ENCODE measurements at regions of chr9 and their contacts with region 1.

Region 1: DNA sequence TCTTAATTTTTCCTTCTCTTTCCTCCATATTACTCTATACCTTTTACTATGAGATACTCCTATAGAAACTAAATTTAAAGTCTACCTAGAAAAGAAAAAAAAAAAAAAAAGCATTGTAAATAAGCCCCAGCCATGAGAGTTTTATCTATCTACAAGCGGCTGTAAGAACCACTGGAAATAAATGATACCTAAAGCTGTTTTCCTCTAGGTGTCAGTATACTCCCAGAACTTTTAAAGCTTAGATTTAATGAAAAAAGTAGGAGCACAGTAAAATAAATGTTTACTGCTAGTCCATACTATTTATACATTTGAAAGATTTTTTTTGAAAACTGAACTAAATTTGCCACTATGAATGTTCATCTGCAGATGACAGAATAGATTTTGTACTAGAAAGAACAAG is 26.2 kb downstream of the TYRP1 start:
- DNase-seq: peak; percentile 26
- ATAC-seq: peak; percentile 54; the same call in 2 of the 3 replicates
- H3K4me3 ChIP-seq: no peak overlapping the region
- H3K27ac ChIP-seq: no peak overlapping the region
- H3K4me1 ChIP-seq: no peaks in the 10 kb centered on the region
- H3K27me3 ChIP-seq: no peaks in the 10 kb centered on the region
- CTCF ChIP-seq: peak; percentile 38
- EP300 ChIP-seq: no peak
- POLR2A ChIP-seq: no peak
- RAD21 ChIP-seq: no peak

Region 2: GRCh38 chr9:12230708-12231107 is 488.7 kb before region 1 on chr9:
- CTCF ChIA-PET with region 1: no interaction called
- POLR2A ChIA-PET with region 1: no interaction called
- in situ Hi-C with region 1: no loop called
- intact Hi-C with region 1: no loop called
- DNase-seq: no peak
- ATAC-seq: no peak
- H3K4me3 ChIP-seq: no peak overlapping the region
- H3K27ac ChIP-seq: no peak overlapping the region
- H3K4me1 ChIP-seq: no peaks in the 10 kb centered on the region
- H3K27me3 ChIP-seq: no peaks in the 10 kb centered on the region
- CTCF ChIP-seq: no peak
- EP300 ChIP-seq: no peak
- POLR2A ChIP-seq: no peak
- RAD21 ChIP-seq: no peak

Region 3: DNA sequence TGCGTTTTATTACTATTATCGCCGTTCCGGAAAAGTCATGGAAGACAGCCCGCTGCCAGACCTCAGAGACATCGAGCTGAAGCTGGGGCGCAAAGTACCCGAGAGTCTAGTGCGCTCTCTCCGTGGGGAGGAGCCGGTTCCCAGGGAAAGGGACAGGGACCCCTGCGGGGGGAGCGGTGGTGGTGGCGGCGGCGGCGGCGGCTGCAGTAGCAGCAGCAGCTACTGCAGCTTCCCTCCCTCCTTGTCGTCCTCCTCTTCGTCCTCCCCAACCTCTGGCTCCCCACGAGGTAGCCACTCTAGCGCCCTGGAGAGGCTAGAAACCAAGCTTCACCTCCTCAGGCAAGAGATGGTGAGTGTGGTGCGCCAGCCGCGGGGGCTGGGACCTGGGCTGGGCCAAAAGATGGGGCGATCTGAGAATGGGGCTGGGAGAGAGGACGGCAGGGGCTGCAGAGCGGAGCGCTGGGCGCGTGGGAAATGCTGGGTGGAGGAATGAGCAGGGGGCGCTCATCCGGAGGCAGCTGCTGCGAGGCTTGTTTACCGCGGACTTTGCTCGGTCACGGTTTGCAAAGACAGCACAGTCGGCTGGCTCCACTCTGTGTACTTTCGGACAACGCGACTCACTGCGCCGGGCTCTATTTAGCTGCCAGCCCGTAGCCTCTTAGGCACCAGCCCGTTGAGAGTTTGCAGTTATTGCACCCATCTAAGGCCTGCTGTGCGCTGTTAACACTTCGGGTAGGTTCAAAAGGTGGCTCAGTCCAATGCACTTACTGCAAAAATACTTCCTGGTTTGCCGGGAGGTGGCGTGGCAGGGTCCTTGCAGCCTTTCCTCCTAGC is 56.5 kb after region 1 on chr9:
- CTCF ChIA-PET with region 1: no interaction called
- POLR2A ChIA-PET with region 1: interaction called, 3 read pairs
- in situ Hi-C with region 1: loop called (anchors 10 kb)
- intact Hi-C with region 1: loop called (anchors 1 kb)
- DNase-seq: peak; percentile 88
- ATAC-seq: peak; percentile 93
- H3K4me3 ChIP-seq: peak overlapping the region; percentile 74 to 90 (median 84)
- H3K27ac ChIP-seq: peak overlapping the region; percentile 97
- H3K4me1 ChIP-seq: peaks cover 24% of the 10 kb centered on the region
- H3K27me3 ChIP-seq: no peaks in the 10 kb centered on the region; a peak in 1 of 5 replicates
- CTCF ChIP-seq: peak; percentile 72
- EP300 ChIP-seq: peak; percentile 60 to 67; a peak in 2 of 4 replicates
- POLR2A ChIP-seq: peak; percentile 82 to 88
- RAD21 ChIP-seq: peak; percentile 48; the same call in 1 of the 2 replicates

Region 4: GRCh38 chr9:12819436-12820185 is 100.2 kb after region 1 on chr9:
- CTCF ChIA-PET with region 1: interaction called, 16 read pairs
- POLR2A ChIA-PET with region 1: interaction called, 6 read pairs
- in situ Hi-C with region 1: loop called (anchors 5 kb)
- intact Hi-C with region 1: loop called (anchors 1 kb)
- DNase-seq: peak; percentile 53
- ATAC-seq: peak; percentile 66
- H3K4me3 ChIP-seq: no peak overlapping the region
- H3K27ac ChIP-seq: no peak overlapping the region
- H3K4me1 ChIP-seq: peaks cover 52% of the 10 kb centered on the region
- H3K27me3 ChIP-seq: no peaks in the 10 kb centered on the region
- CTCF ChIP-seq: peak; percentile 76
- EP300 ChIP-seq: no peak
- POLR2A ChIP-seq: no peak
- RAD21 ChIP-seq: peak; percentile 73

Region 5: GRCh38 chr9:12833701-12834100 is 114.3 kb after region 1 on chr9:
- CTCF ChIA-PET with region 1: no interaction called
- POLR2A ChIA-PET with region 1: no interaction called
- in situ Hi-C with region 1: no loop called
- intact Hi-C with region 1: no loop called
- DNase-seq: no peak
- ATAC-seq: no peak
- H3K4me3 ChIP-seq: no peak overlapping the region
- H3K27ac ChIP-seq: no peak overlapping the region
- H3K4me1 ChIP-seq: no peaks in the 10 kb centered on the region
- H3K27me3 ChIP-seq: no peaks in the 10 kb centered on the region
- CTCF ChIP-seq: no peak
- EP300 ChIP-seq: no peak
- POLR2A ChIP-seq: no peak
- RAD21 ChIP-seq: no peak

Region 6: GRCh38 chr9:12884737-12885414 is 165.4 kb after region 1 on chr9:
- CTCF ChIA-PET with region 1: interaction called, 26 read pairs
- POLR2A ChIA-PET with region 1: no interaction called
- in situ Hi-C with region 1: loop called (anchors 5 kb)
- intact Hi-C with region 1: loop called (anchors 1 kb)
- DNase-seq: peak; percentile 36
- ATAC-seq: peak; percentile 77
- H3K4me3 ChIP-seq: no peak overlapping the region
- H3K27ac ChIP-seq: no peak overlapping the region
- H3K4me1 ChIP-seq: no peaks in the 10 kb centered on the region
- H3K27me3 ChIP-seq: no peaks in the 10 kb centered on the region
- CTCF ChIP-seq: peak; percentile 73
- EP300 ChIP-seq: no peak
- POLR2A ChIP-seq: no peak
- RAD21 ChIP-seq: peak; percentile 67

Region 7: GRCh38 chr9:12988253-12988652 is 268.8 kb after region 1 on chr9:
- CTCF ChIA-PET with region 1: no interaction called
- POLR2A ChIA-PET with region 1: no interaction called
- in situ Hi-C with region 1: no loop called
- intact Hi-C with region 1: loop called (anchors 5 kb)
- DNase-seq: no peak
- ATAC-seq: no peak
- H3K4me3 ChIP-seq: no peak overlapping the region
- H3K27ac ChIP-seq: no peak overlapping the region
- H3K4me1 ChIP-seq: no peaks in the 10 kb centered on the region
- H3K27me3 ChIP-seq: no peaks in the 10 kb centered on the region
- CTCF ChIP-seq: no peak
- EP300 ChIP-seq: no peak
- POLR2A ChIP-seq: no peak
- RAD21 ChIP-seq: no peak

Region 8: GRCh38 chr9:13033959-13034693 is 314.7 kb after region 1 on chr9:
- CTCF ChIA-PET with region 1: no interaction called
- POLR2A ChIA-PET with region 1: no interaction called
- in situ Hi-C with region 1: no loop called
- intact Hi-C with region 1: loop called (anchors 1 kb)
- DNase-seq: peak; percentile 38
- ATAC-seq: peak; percentile 97
- H3K4me3 ChIP-seq: 0 out of 6 replicates have a peak overlapping the region, but pooled peaks of 1 of the 3 experiments have one; percentile 12
- H3K27ac ChIP-seq: no peak overlapping the region
- H3K4me1 ChIP-seq: peaks cover 12% of the 10 kb centered on the region
- H3K27me3 ChIP-seq: no peaks in the 10 kb centered on the region
- CTCF ChIP-seq: peak; percentile 90
- EP300 ChIP-seq: 0 out of 4 replicates have a peak, but pooled peaks of 1 of the 2 experiments have one; percentile 4
- POLR2A ChIP-seq: no peak
- RAD21 ChIP-seq: peak; percentile 57

Region 9: DNA sequence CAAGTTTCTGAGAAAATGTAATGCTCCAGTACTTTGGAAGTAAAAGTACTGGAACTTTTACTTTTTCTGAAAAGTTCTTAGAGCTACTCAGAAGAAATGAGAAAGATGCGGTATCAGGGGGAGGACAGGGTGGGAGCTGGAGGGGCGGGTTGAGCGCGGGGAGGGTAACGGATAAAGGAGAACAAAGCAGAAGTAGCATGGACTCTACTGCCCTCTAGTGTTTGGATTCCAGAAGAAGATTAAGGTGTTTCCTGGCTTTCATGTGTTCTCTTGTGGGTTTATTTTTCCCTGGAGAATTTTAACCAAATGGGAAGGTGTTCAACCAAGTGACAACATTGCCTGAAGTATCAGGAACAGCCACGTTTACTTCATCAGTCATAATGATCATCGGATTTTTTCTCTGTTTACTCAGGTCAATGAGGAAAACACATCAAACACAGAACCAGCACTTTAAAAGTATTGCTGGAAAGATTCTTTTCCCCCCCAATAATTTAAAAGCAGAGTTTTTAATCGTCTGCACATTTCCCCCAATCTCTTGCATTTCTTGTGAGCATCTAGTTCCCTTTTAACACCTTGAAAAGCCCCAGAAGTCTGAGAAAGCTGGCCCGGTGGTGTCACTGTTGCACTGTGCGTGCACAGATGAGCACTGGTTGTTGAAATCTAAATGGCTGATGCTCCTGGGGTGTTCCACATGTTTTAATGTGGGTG is 369.4 kb after region 1 on chr9:
- CTCF ChIA-PET with region 1: interaction called, 9 read pairs
- POLR2A ChIA-PET with region 1: no interaction called
- in situ Hi-C with region 1: loop called (anchors 10 kb)
- intact Hi-C with region 1: loop called (anchors 1 kb)
- DNase-seq: peak; percentile 36
- ATAC-seq: peak; percentile 78
- H3K4me3 ChIP-seq: no peak overlapping the region
- H3K27ac ChIP-seq: no peak overlapping the region
- H3K4me1 ChIP-seq: no peaks in the 10 kb centered on the region
- H3K27me3 ChIP-seq: no peaks in the 10 kb centered on the region
- CTCF ChIP-seq: peak; percentile 68
- EP300 ChIP-seq: no peak
- POLR2A ChIP-seq: no peak
- RAD21 ChIP-seq: no peak

Measured in HepG2 (cell line).